BJ (cell line): ENCODE measurements at regions of chr19 and their contacts with region 1.

Region 1: GRCh38 chr19:46271481-46272197 is 25.2 kb upstream of the HIF3A start:
- DNase-seq: peak; percentile 71
- H3K4me3 ChIP-seq: no peak overlapping the region
- H3K27me3 ChIP-seq: peaks cover 6% of the 10 kb centered on the region
- CTCF ChIP-seq: no peak

Region 2: GRCh38 chr19:46201413-46202310 is 70.0 kb before region 1 on chr19:
- CTCF ChIA-PET with region 1: no interaction called
- POLR2A ChIA-PET with region 1: no interaction called
- DNase-seq: no peak
- H3K4me3 ChIP-seq: no peak overlapping the region
- H3K27me3 ChIP-seq: peaks cover 28% of the 10 kb centered on the region
- CTCF ChIP-seq: no peak

Region 3: GRCh38 chr19:46746281-46747013 is 474.8 kb after region 1 on chr19 and contains the start of gene STRN4:
- CTCF ChIA-PET with region 1: no interaction called
- POLR2A ChIA-PET with region 1: interaction called, 17 read pairs
- DNase-seq: no peak
- H3K4me3 ChIP-seq: peak within 1 kb of the TSS; percentile 99
- H3K27me3 ChIP-seq: no peaks in the 10 kb centered on the region
- CTCF ChIP-seq: no peak
- polyA plus RNA-seq, gene STRN4: 40.5 and 78.6 TPM in 2 replicates